CD8-positive, alpha-beta T cell (primary cell): ENCODE measurements at regions of chr1 and their contacts with region 1.

Region 1: DNA sequence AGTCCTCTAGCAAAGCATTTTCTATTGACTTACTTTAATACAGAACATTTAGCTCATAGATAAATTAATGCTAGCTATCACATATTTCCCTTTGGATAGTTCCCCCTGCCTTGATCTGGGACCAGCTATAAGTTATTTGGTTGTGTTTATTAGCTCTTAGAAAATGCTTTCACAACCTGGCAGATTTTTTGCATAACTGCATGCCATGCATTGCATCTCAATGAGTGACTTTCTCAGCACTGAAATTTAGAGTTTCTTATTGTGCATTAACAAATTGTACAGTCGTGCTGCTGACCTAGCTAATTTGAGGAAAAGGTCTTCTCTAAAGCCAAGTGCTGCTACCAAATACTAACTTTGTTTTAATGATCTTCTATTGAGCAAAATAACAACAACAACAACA is 164.8 kb downstream of the PLPPR5 start:
- DNase-seq: no peak
- ATAC-seq: no peak
- H3K4me3 ChIP-seq: no peak overlapping the region
- H3K4me3 Mint-ChIP-seq: no peak overlapping the region
- H3K27ac ChIP-seq: no peak overlapping the region
- H3K27ac Mint-ChIP-seq: no peak overlapping the region
- H3K4me1 ChIP-seq: no peaks in the 10 kb centered on the region
- H3K4me1 Mint-ChIP-seq: peaks cover 24% of the 10 kb centered on the region
- H3K27me3 ChIP-seq: no peaks in the 10 kb centered on the region
- H3K27me3 Mint-ChIP-seq: no peaks in the 10 kb centered on the region
- CTCF ChIP-seq: no peak

Region 2: DNA sequence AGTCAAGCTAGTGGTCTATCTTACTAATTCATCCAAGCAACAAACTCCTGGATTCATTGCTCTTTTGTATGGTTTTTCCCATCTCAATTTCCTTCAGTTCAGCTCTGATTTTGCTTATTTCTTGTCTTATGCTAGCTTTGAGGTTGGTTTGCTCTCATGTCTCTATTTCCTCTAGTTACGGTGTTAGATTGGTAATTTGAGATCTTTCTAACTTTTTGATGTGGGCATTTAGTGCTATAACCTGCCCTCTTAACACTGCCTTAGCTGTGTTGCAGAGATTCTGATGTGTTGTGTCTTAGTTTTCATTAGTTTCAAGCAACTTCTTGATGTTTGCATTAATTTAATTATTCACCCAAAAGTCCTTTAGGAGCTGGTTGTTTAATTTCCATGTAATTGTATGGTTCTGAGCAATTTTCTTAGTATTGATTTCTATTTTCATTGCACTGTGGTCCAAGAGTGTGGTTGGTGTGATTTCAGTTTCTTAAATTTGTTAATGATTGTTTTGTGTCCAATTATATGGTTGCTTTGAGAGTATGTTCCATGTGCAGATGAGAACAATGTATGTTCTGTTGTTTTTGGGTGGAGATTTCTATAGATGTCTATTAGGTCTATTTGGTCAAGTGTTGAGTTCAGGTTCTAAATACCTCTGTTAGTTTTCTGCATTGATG is 10.3 kb after region 1 on chr1:
- CTCF ChIA-PET with region 1: interaction called, 3 read pairs
- POLR2A ChIA-PET with region 1: no interaction called
- intact Hi-C with region 1: loop called in 1 of 2 experiments (anchors 2 kb)
- DNase-seq: peak in 2 of 9 experiments; percentile 25 to 46
- ATAC-seq: no peak
- H3K4me3 ChIP-seq: no peak overlapping the region
- H3K4me3 Mint-ChIP-seq: peak overlapping the region; percentile 32
- H3K27ac ChIP-seq: no peak overlapping the region
- H3K27ac Mint-ChIP-seq: peak overlapping the region; percentile 73
- H3K4me1 ChIP-seq: peaks cover 31% of the 10 kb centered on the region
- H3K4me1 Mint-ChIP-seq: peaks cover 20% of the 10 kb centered on the region
- H3K27me3 ChIP-seq: no peaks in the 10 kb centered on the region
- H3K27me3 Mint-ChIP-seq: no peaks in the 10 kb centered on the region
- CTCF ChIP-seq: no peak

Region 3: DNA sequence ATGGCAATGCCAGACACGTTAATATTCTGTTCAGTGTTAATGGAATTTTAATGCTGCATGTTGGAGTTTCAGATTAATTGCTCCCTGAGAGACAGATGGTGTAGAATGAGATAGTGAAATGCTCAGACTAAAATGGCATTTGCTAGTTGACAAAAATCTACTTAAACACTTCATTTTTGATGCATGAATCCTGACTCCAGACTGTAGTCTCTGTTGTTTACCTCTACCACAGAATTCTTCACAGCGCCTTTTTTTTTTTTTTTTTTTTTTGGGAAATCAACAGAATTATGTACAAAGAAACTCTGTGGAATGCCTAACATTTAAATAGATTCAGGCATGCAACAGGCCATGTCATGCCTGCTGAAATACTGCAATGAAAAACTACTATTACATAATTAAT is 53.5 kb after region 1 on chr1:
- CTCF ChIA-PET with region 1: no interaction called
- POLR2A ChIA-PET with region 1: no interaction called
- intact Hi-C with region 1: loop called in 1 of 2 experiments (anchors 5 kb)
- DNase-seq: no peak
- ATAC-seq: no peak
- H3K4me3 ChIP-seq: no peak overlapping the region
- H3K4me3 Mint-ChIP-seq: no peak overlapping the region
- H3K27ac ChIP-seq: no peak overlapping the region
- H3K27ac Mint-ChIP-seq: no peak overlapping the region
- H3K4me1 ChIP-seq: no peaks in the 10 kb centered on the region
- H3K4me1 Mint-ChIP-seq: peaks cover 16% of the 10 kb centered on the region
- H3K27me3 ChIP-seq: no peaks in the 10 kb centered on the region
- H3K27me3 Mint-ChIP-seq: no peaks in the 10 kb centered on the region
- CTCF ChIP-seq: no peak

Region 4: DNA sequence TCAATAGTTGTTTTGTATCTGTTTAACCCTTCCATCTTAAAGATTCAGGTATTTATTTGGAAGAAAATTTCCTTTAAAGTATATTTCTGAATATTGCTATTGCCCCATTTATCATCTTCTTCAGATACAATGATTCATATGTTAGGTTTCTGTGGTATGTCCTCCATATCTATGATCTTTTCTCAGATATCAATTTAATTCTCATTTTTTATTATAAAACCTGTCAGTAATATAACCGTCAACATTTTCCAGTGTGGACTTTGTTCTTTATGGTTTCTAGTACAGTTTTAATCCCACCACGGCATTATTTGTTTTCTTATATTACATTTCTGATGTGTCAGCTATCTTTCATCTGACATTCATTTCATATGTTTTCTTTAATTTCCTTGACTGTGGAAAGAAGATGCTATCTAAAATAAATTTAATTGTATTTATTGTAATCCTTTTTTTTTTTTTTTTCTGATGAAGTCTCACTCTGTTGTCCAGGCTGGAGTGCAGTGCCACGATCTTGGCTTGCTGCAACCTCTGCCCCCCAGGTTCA is 67.0 kb after region 1 on chr1:
- CTCF ChIA-PET with region 1: no interaction called
- POLR2A ChIA-PET with region 1: no interaction called
- intact Hi-C with region 1: no loop called
- DNase-seq: no peak
- ATAC-seq: no peak
- H3K4me3 ChIP-seq: no peak overlapping the region
- H3K4me3 Mint-ChIP-seq: no peak overlapping the region
- H3K27ac ChIP-seq: no peak overlapping the region
- H3K27ac Mint-ChIP-seq: no peak overlapping the region
- H3K4me1 ChIP-seq: no peaks in the 10 kb centered on the region
- H3K4me1 Mint-ChIP-seq: peaks cover 2% of the 10 kb centered on the region
- H3K27me3 ChIP-seq: no peaks in the 10 kb centered on the region
- H3K27me3 Mint-ChIP-seq: no peaks in the 10 kb centered on the region
- CTCF ChIP-seq: no peak

Region 5: GRCh38 chr1:98919211-98919610 is 79.4 kb after region 1 on chr1:
- CTCF ChIA-PET with region 1: no interaction called
- POLR2A ChIA-PET with region 1: no interaction called
- intact Hi-C with region 1: loop called in 1 of 2 experiments (anchors 5 kb)
- DNase-seq: no peak
- ATAC-seq: no peak
- H3K4me3 ChIP-seq: no peak overlapping the region
- H3K4me3 Mint-ChIP-seq: no peak overlapping the region
- H3K27ac ChIP-seq: no peak overlapping the region
- H3K27ac Mint-ChIP-seq: no peak overlapping the region
- H3K4me1 ChIP-seq: no peaks in the 10 kb centered on the region
- H3K4me1 Mint-ChIP-seq: peaks cover 2% of the 10 kb centered on the region
- H3K27me3 ChIP-seq: no peaks in the 10 kb centered on the region
- H3K27me3 Mint-ChIP-seq: no peaks in the 10 kb centered on the region
- CTCF ChIP-seq: no peak